Dendritic cell treated with granulocyte-macrophage colony-stimulating factor and Interleukin-4, amounts not matched to agents 40 ng/mL and 50 ng/mL, for 4 days (primary cell): ENCODE measurements at regions of chr3 and their contacts with region 1.

Region 1: DNA sequence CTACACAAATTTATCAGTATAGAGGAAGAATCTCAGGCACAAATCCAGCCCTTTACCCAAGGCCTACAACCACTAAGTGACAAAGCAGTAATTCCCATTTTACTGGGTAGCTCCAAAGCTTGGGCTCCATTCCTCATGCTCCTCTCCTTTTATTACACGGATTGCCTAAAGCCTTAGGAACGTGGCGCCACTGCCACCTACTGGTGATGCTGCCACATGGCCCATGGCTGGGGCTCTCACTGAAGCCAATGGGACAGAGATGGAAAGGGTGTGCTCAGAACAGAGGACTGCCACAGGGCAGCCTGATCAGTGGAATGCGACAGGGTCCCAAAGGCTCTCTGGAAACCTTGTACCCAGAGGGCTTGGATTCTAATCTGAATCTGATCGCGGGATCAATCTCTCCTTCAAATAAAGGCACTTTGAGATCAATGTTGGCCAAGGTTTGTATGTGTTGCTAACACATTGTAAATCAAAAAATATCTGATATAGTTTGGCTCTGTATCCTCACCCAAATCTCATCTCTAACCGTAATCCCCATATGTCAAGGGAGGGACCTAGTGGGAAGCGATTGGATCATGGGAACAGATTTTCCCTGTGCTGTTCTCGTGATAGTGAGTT is 33.5 kb upstream of the LYZL4 start:
- H3K4me3 Mint-ChIP-seq: no peak overlapping the region
- H3K27ac Mint-ChIP-seq: no peak overlapping the region
- H3K4me1 Mint-ChIP-seq: no peaks in the 10 kb centered on the region
- H3K27me3 Mint-ChIP-seq: peaks cover 37% of the 10 kb centered on the region

Region 2: GRCh38 chr3:40580494-40581091 is 1863.3 kb before region 1 on chr3:
- intact Hi-C with region 1: loop called (anchors 10 kb)
- H3K4me3 Mint-ChIP-seq: no peak overlapping the region
- H3K27ac Mint-ChIP-seq: no peak overlapping the region
- H3K4me1 Mint-ChIP-seq: peaks cover 9% of the 10 kb centered on the region
- H3K27me3 Mint-ChIP-seq: peaks cover 6% of the 10 kb centered on the region

Region 3: DNA sequence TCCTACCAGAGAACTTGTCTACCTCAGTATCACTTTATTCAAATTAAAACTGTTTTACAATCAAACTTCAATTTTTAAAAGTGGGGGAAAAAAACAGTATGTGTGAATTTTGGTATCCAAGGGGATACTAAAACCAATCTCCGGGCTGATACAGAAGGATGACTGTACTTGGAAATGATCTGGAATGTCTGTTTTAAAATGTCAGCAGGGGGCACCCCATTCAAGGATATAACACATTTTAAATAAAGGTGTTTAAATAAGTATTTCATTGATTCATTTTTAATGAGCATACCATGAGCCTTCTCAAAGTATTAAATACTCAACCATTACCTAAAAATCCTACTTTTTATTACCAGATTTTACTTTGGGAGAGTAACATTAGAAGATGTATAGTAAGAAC is 550.0 kb before region 1 on chr3:
- intact Hi-C with region 1: loop called (anchors 5 kb)
- H3K4me3 Mint-ChIP-seq: no peak overlapping the region
- H3K27ac Mint-ChIP-seq: no peak overlapping the region
- H3K4me1 Mint-ChIP-seq: no peaks in the 10 kb centered on the region
- H3K27me3 Mint-ChIP-seq: no peaks in the 10 kb centered on the region

Region 4: GRCh38 chr3:42118762-42119361 is 325.1 kb before region 1 on chr3:
- intact Hi-C with region 1: loop called (anchors 10 kb)
- H3K4me3 Mint-ChIP-seq: no peak overlapping the region
- H3K27ac Mint-ChIP-seq: peak overlapping the region; percentile 15
- H3K4me1 Mint-ChIP-seq: peaks cover 84% of the 10 kb centered on the region
- H3K27me3 Mint-ChIP-seq: no peaks in the 10 kb centered on the region

Region 5: GRCh38 chr3:42229942-42230688 is 213.8 kb before region 1 on chr3:
- intact Hi-C with region 1: loop called (anchors 1 kb)
- H3K4me3 Mint-ChIP-seq: no peak overlapping the region
- H3K27ac Mint-ChIP-seq: no peak overlapping the region
- H3K4me1 Mint-ChIP-seq: no peaks in the 10 kb centered on the region
- H3K27me3 Mint-ChIP-seq: peaks cover 12% of the 10 kb centered on the region

Region 6: DNA sequence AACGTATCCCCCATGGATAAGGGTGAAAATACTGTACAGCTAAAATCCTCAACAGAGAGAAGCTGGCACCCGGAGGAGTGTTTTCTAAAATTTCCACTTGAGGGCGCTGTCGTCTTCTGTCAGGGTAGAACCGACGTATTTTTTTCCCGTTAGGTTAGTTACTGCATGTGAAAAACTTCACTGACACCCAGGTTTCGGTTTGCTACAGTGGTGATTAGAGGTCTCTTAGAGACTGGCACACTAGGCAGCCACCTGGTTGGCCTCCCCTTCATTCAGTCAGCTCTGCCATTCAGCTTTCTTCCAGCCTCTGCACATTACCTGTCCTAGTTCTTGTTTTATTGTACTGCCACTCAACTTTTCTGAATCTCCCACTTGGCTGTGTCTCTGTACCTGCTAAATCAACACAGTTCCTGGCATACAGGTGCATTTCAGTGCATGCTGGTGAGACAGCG is 196.3 kb before region 1 on chr3:
- intact Hi-C with region 1: loop called (anchors 1 kb)
- H3K4me3 Mint-ChIP-seq: no peak overlapping the region
- H3K27ac Mint-ChIP-seq: no peak overlapping the region
- H3K4me1 Mint-ChIP-seq: no peaks in the 10 kb centered on the region
- H3K27me3 Mint-ChIP-seq: peaks cover 25% of the 10 kb centered on the region

Region 7: DNA sequence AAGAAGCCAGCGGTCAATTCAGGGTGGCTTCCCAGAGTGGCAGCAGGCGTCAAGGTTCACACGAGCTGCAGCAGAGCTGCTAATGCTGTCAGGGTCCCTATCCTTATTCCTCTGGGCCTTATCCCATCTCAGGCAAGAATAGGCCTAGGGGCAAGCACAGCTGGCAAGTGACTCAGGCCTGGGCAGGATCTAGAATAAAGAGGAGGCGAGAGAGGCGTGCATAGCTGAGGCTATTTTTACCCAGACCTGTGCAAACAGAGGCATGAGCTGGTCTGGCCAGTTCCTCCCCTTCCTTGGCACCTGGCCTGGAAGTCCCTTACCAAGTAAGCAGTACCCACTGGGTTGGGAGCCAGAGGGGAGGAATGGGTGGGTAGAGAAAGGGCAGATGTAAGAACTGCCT is 46.3 kb after region 1 on chr3:
- intact Hi-C with region 1: no loop called
- H3K4me3 Mint-ChIP-seq: peak overlapping the region; percentile 49
- H3K27ac Mint-ChIP-seq: peak overlapping the region; percentile 66
- H3K4me1 Mint-ChIP-seq: peaks cover 61% of the 10 kb centered on the region
- H3K27me3 Mint-ChIP-seq: no peaks in the 10 kb centered on the region